ENCODE measurements at regions of chr7 and their contacts with region 1.

Region 1: DNA sequence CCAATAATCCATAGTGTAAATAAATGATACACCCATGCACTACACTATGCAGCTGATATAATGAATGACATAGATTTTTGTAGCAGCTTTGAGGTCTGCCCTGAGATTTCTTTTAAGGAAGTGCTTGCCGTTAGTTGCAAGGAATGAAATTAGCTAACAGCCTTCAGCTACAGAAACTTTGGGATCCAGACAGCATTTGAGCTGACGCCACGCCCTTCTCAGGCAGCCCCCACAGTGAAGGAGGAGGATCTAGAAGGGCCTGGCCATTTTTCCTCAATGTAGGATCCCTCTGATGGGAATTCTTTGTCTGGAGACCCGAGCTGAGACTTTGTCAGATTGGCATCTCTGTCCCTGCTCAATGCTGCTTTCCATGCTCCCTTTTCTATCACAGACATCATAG is 6.1 kb upstream of the PDK4 start:
- DNase-seq: no peak
- ATAC-seq: no peak
- H3K4me3 ChIP-seq: no peak overlapping the region
- H3K27ac ChIP-seq: peak overlapping the region in 2 of 12 donors; percentile 27 to 98
- H3K4me1 ChIP-seq: peaks cover 7 to 70% (median 24%) of the 10 kb centered on the region in 12 donors
- H3K27me3 ChIP-seq: no peaks in the 10 kb centered on the region
- CTCF ChIP-seq: no peak
- POLR2A ChIP-seq: no peak

Region 2: DNA sequence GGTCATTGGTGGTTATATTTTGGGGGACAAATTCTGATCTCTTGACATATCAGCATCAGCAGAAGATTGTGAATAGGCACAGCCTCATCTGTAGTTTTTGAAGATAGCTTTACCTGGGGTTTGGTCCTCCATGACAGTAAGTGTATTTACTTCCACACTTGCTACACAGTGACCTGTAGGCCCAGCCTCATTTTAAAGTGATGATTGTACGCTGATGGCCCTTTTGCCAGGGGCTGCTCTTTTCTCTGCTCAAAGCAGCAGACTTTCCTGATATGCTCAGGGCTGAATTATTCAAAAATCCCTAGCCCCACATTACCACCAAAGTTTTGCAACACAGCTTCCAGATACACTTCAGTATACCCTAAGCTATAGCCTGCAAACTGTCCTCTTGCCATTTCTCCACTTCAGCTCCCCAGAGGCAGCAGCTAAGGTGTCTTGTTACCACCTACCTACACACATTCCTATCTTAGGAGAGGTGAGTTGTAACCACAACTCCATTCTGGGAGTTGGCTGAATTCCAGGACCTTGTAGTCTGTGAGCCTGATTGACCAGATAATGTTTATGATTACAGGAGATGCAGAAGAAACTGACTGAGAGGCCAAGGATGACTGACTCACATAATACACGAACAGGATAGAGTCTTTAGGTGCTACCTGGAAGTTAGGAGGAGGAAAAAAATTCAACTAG is 110.6 kb before region 1 on chr7:
- intact Hi-C with region 1: no loop called
- DNase-seq: no peak
- ATAC-seq: no peak
- H3K4me3 ChIP-seq: no peak overlapping the region
- H3K27ac ChIP-seq: no peak overlapping the region
- H3K4me1 ChIP-seq: peaks cover 0 to 6% (median 0%) of the 10 kb centered on the region in 12 donors
- H3K27me3 ChIP-seq: no peaks in the 10 kb centered on the region
- CTCF ChIP-seq: no peak
- POLR2A ChIP-seq: no peak

Region 3: GRCh38 chr7:95590387-95591248 is 11.8 kb before region 1 on chr7:
- intact Hi-C with region 1: no loop called
- DNase-seq: no peak
- ATAC-seq: peak in 3 of 4 donors; percentile 0 to 25 (median 17)
- H3K4me3 ChIP-seq: peak overlapping the region in 9 of 12 donors; percentile 8 to 98 (median 86)
- H3K27ac ChIP-seq: peak overlapping the region in 11 of 12 donors; percentile 4 to 99 (median 35)
- H3K4me1 ChIP-seq: peaks cover 0 to 85% (median 54%) of the 10 kb centered on the region in 12 donors
- H3K27me3 ChIP-seq: no peaks in the 10 kb centered on the region
- CTCF ChIP-seq: no peak
- POLR2A ChIP-seq: peak in 1 of 2 donors; percentile 71

Region 4: DNA sequence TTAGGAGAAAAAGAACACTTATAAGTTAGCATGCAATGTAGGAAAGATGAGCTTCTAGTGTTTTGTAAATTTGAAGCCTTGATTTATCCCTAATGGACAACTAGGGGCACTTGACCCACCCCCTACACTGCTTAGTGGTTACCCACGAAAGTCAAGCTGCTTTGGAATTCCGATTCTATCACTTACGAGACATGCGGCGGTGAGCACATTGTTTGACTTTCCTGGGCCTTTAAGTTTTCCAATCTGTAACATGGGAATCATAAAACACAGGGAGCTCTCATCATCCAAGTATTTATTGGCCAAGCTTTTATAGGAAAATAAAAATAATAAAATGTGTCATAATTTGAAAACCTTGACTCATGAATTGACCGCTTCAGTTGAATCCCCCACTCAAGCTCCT is 72.6 kb after region 1 on chr7:
- intact Hi-C with region 1: loop called in 5 of 10 experiments (anchors 5 kb)
- DNase-seq: no peak
- ATAC-seq: no peak
- H3K4me3 ChIP-seq: no peak overlapping the region
- H3K27ac ChIP-seq: no peak overlapping the region
- H3K4me1 ChIP-seq: no peaks in the 10 kb centered on the region
- H3K27me3 ChIP-seq: no peaks in the 10 kb centered on the region
- CTCF ChIP-seq: no peak
- POLR2A ChIP-seq: no peak

Measured in heart left ventricle (tissue), 16 donors.